ENCODE measurements at regions of chr7 and their contacts with region 1.

Region 1: GRCh38 chr7:28921822-28922221 is 36.3 kb downstream of the TRIL start:
- DNase-seq: peak; percentile 67
- H3K4me3 ChIP-seq: no peak overlapping the region
- H3K27ac ChIP-seq: no peak overlapping the region
- H3K4me1 ChIP-seq: no peaks in the 10 kb centered on the region
- H3K27me3 ChIP-seq: peaks cover 4 to 6% of the 10 kb centered on the region in 2 experiments
- CTCF ChIP-seq: peak; percentile 74 to 76
- POLR2A ChIP-seq: no peak

Region 2: GRCh38 chr7:28389504-28390395 is 532.1 kb before region 1 on chr7:
- CTCF ChIA-PET with region 1: interaction called, 4 read pairs
- POLR2A ChIA-PET with region 1: no interaction called
- dilution Hi-C with region 1: no loop called
- intact Hi-C with region 1: loop called (anchors 1 kb)
- DNase-seq: peak; percentile 76
- H3K4me3 ChIP-seq: peak overlapping the region in 2 of 3 experiments; percentile 1 to 54
- H3K27ac ChIP-seq: no peak overlapping the region
- H3K4me1 ChIP-seq: no peaks in the 10 kb centered on the region
- H3K27me3 ChIP-seq: peaks cover 10 to 13% of the 10 kb centered on the region in 2 experiments
- CTCF ChIP-seq: peak; percentile 39 to 41
- POLR2A ChIP-seq: no peak

Region 3: GRCh38 chr7:28904578-28905048 is 17.2 kb before region 1 on chr7:
- CTCF ChIA-PET with region 1: interaction called, 14 read pairs
- POLR2A ChIA-PET with region 1: no interaction called
- dilution Hi-C with region 1: no loop called
- intact Hi-C with region 1: no loop called
- DNase-seq: no peak
- H3K4me3 ChIP-seq: no peak overlapping the region
- H3K27ac ChIP-seq: no peak overlapping the region
- H3K4me1 ChIP-seq: no peaks in the 10 kb centered on the region
- H3K27me3 ChIP-seq: peaks cover 2 to 13% of the 10 kb centered on the region in 2 experiments
- CTCF ChIP-seq: no peak
- POLR2A ChIP-seq: no peak

Region 4: GRCh38 chr7:28980451-28980891 is 58.6 kb after region 1 on chr7:
- CTCF ChIA-PET with region 1: interaction called, 16 read pairs
- POLR2A ChIA-PET with region 1: no interaction called
- dilution Hi-C with region 1: no loop called
- intact Hi-C with region 1: no loop called
- DNase-seq: no peak
- H3K4me3 ChIP-seq: no peak overlapping the region
- H3K27ac ChIP-seq: no peak overlapping the region
- H3K4me1 ChIP-seq: no peaks in the 10 kb centered on the region
- H3K27me3 ChIP-seq: peaks cover 2% of the 10 kb centered on the region in 2 experiments
- CTCF ChIP-seq: no peak
- POLR2A ChIP-seq: no peak

Region 5: GRCh38 chr7:29105752-29106668 is 184.2 kb after region 1 on chr7:
- CTCF ChIA-PET with region 1: interaction called, 1,408 read pairs
- POLR2A ChIA-PET with region 1: no interaction called
- dilution Hi-C with region 1: no loop called
- intact Hi-C with region 1: loop called (anchors 1 kb)
- DNase-seq: peak; percentile 66
- H3K4me3 ChIP-seq: no peak overlapping the region
- H3K27ac ChIP-seq: no peak overlapping the region
- H3K4me1 ChIP-seq: no peaks in the 10 kb centered on the region
- H3K27me3 ChIP-seq: peaks cover 8 to 13% of the 10 kb centered on the region in 2 experiments
- CTCF ChIP-seq: peak; percentile 69 to 75
- POLR2A ChIP-seq: no peak

Region 6: GRCh38 chr7:29408841-29409243 is 487.0 kb after region 1 on chr7:
- CTCF ChIA-PET with region 1: interaction called, 234 read pairs
- POLR2A ChIA-PET with region 1: no interaction called
- dilution Hi-C with region 1: no loop called
- intact Hi-C with region 1: loop called (anchors 1 kb)
- DNase-seq: peak; percentile 73
- H3K4me3 ChIP-seq: no peak overlapping the region
- H3K27ac ChIP-seq: no peak overlapping the region
- H3K4me1 ChIP-seq: no peaks in the 10 kb centered on the region
- H3K27me3 ChIP-seq: no peaks in the 10 kb centered on the region
- CTCF ChIP-seq: peak; percentile 61 to 67
- POLR2A ChIP-seq: no peak

Measured in endothelial cell of umbilical vein (primary cell).